Motor neuron (in vitro differentiated cells): ENCODE measurements at regions of chr7 and their contacts with region 1.

Region 1: GRCh38 chr7:82740246-82740848 is 296.8 kb upstream of the CACNA2D1 start:
- ATAC-seq: peak in 3 of 8 experiments; percentile 74 to 76 (median 74)
- H3K4me3 ChIP-seq: no peak overlapping the region
- H3K27ac ChIP-seq: no peak overlapping the region
- H3K4me1 ChIP-seq: no peaks in the 10 kb centered on the region

Region 2: DNA sequence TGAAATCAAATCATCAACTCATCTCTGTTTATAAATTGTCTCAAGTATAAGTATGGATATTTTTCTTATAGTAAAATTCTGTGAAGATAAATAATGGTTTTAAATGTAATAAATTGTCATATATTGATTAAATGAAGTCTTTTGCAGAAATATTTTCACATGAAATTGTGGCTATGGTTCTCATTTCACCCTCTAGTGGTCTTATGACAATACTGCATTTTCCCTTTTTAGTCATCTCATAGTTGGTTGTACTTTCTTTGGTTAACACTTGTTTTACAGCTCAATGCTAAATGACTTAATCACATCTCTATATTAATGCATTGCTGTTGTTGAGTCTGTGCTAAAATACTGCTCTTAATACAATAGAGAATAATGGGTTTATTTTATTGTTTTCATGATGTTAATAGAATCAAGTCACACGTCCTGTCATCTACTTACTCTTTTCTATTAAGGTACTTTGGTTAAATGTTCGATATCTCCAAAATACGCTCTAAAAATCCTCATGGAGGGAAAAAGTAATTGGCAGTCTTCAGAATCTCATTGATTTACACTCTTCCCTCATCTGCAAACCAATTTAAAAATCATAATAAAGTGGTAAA is 258.7 kb before region 1 on chr7:
- in situ Hi-C with region 1: loop called in 1 of 9 experiments (anchors 25 kb)
- ATAC-seq: no peak
- H3K4me3 ChIP-seq: no peak overlapping the region
- H3K27ac ChIP-seq: no peak overlapping the region
- H3K4me1 ChIP-seq: peaks cover 0 to 12% of the 10 kb centered on the region in 2 donors

Region 3: GRCh38 chr7:83015916-83016315 is 275.6 kb after region 1 on chr7:
- in situ Hi-C with region 1: no loop called
- ATAC-seq: no peak
- H3K4me3 ChIP-seq: no peak overlapping the region
- H3K27ac ChIP-seq: no peak overlapping the region
- H3K4me1 ChIP-seq: no peaks in the 10 kb centered on the region

Region 4: GRCh38 chr7:83271212-83272099 is 531.1 kb after region 1 on chr7:
- in situ Hi-C with region 1: loop called in 1 of 9 experiments (anchors 10 kb)
- ATAC-seq: peak; percentile 44 to 89 (median 68)
- H3K4me3 ChIP-seq: no peak overlapping the region
- H3K27ac ChIP-seq: no peak overlapping the region
- H3K4me1 ChIP-seq: peaks cover 2 to 9% of the 10 kb centered on the region in 2 donors